Mammary epithelial cell (primary cell): ENCODE measurements at regions of chr12 and their contacts with region 1.

Region 1: GRCh38 chr12:70070494-70071007 is 172.7 kb upstream of the CNOT2 start:
- DNase-seq: no peak
- H3K4me3 ChIP-seq: no peak overlapping the region
- H3K27ac ChIP-seq: no peak overlapping the region
- H3K4me1 ChIP-seq: no peaks in the 10 kb centered on the region
- H3K27me3 ChIP-seq: no peaks in the 10 kb centered on the region
- CTCF ChIP-seq: no peak

Region 2: DNA sequence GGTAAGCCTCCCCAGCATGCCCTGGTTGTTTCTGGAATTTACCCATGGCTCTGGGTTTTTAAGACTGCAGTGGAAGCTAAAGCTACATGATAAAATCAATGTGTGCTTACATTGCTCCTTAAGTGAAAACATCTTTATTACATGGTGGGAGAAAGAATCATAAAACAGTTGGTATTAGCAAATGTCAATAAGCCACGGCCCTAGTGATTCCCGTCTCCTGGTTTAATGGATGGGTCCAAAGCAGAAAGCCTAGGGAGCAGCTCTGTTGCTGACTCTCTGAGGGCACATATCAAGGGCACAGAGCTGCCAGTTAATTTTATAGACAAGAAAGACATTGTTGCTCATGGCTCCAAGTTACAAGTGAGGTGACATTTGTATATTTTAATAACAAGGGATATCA is 117.7 kb before region 1 on chr12:
- CTCF ChIA-PET with region 1: interaction called, 14 read pairs
- dilution Hi-C with region 1: no loop called
- in situ Hi-C with region 1: no loop called
- intact Hi-C with region 1: no loop called
- DNase-seq: no peak
- H3K4me3 ChIP-seq: no peak overlapping the region
- H3K27ac ChIP-seq: no peak overlapping the region
- H3K4me1 ChIP-seq: no peaks in the 10 kb centered on the region
- H3K27me3 ChIP-seq: no peaks in the 10 kb centered on the region
- CTCF ChIP-seq: no peak

Region 3: DNA sequence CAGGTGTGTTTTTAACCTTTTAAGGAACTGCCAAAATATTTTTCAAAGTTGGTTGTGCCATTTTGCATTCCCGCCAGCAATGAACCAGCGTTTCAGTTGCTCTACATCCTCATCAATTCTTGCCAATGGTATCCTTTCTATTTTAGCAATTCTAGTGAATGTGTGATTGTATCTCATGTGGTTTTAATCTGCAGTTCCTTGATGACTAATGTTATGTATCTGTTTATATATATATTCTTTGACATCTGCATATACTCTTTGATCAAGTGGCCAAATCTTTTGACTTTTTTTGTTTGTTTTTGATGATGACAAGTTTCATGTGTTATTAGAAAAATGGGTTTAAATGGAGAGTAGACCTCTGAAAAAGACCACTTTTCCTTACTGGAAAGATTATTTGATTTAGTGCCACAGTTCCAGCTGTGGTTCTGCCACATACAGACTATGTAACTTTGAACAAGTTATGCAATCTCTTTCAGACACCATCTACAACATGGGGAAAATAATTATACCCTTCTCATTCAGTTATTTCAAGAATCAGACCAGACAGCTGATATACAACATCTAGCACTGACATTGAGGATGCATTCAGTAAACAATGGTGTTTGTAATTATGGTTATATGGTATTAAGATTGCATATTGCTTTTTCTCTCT is 26.3 kb after region 1 on chr12:
- CTCF ChIA-PET with region 1: no interaction called
- dilution Hi-C with region 1: no loop called
- in situ Hi-C with region 1: no loop called
- intact Hi-C with region 1: loop called (anchors 1 kb)
- DNase-seq: no peak
- H3K4me3 ChIP-seq: no peak overlapping the region
- H3K27ac ChIP-seq: no peak overlapping the region
- H3K4me1 ChIP-seq: no peaks in the 10 kb centered on the region
- H3K27me3 ChIP-seq: no peaks in the 10 kb centered on the region
- CTCF ChIP-seq: no peak